ENCODE measurements at regions of chr3 and their contacts with region 1.

Region 1: GRCh38 chr3:58305882-58306711 is at the starts of genes HTD2 and RPP14:
- DNase-seq: peak; percentile 96
- CTCF ChIP-seq: peak; percentile 98

Region 2: GRCh38 chr3:58167431-58168351 is 138.4 kb before region 1 on chr3:
- CTCF ChIA-PET with region 1: interaction called, 17 read pairs
- POLR2A ChIA-PET with region 1: no interaction called
- DNase-seq: peak; percentile 83
- CTCF ChIP-seq: peak; percentile 85

Region 3: GRCh38 chr3:58206406-58207011 is 99.6 kb before region 1 on chr3:
- CTCF ChIA-PET with region 1: interaction called, 27 read pairs
- POLR2A ChIA-PET with region 1: interaction called, 3 read pairs
- DNase-seq: no peak
- CTCF ChIP-seq: no peak

Region 4: DNA sequence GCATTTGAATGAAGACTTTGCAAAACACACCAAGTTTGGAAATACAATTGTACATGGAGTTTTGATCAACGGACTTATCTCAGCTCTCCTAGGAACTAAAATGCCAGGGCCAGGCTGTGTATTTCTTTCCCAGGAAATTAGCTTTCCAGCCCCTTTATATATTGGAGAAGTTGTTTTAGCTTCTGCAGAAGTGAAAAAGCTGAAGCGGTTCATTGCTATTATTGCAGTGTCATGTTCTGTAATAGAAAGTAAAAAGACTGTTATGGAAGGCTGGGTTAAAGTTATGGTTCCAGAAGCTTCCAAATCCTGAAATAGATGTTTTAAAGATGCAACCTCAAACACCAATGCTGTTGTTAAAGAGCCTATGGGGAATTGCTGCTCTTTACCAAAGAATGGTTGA is 11.7 kb after region 1 on chr3:
- CTCF ChIA-PET with region 1: interaction called, 107 read pairs
- POLR2A ChIA-PET with region 1: no interaction called
- DNase-seq: no peak
- CTCF ChIP-seq: no peak

Region 5: DNA sequence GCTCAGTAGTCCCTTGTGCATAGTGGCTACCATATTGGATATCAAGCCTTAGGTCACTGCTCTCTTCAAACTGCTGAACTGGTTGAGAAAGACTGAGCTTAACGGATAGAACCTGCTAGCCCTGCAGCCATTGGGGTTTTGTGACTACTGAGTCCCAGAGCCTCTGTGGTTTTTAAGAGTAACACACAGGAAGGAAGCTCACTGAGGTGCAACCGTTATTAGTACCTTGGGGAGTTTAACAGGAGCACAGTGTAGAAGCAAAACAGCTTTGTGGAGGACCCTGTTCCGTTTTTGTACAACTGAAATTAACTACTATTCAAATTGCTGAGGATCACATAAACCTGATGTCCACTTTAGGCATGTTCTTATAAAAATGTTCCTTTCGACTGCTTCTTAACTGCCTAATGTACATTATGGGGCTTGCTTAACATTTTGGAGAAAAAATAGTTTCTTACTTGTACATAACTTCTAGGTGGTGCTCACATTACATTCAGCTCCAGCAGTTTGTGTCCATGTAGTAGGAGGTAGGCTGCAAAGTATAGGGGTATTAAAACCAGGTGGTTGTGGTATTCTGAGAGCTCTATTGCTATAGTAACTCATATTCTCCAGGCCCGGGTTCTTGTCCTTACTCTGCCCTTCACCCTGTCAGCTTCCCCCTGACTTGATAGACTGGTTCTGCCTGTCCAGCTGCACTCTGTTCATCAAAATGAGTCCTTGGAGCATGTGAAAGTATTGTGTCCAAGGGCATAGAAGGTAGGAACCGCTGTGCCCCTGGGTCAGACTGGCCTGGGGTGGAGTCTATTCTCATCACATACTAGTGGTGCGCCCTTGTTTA is 43.9 kb after region 1 on chr3:
- CTCF ChIA-PET with region 1: interaction called, 19 read pairs
- POLR2A ChIA-PET with region 1: no interaction called
- DNase-seq: peak; percentile 65
- CTCF ChIP-seq: no peak

Region 6: GRCh38 chr3:58491506-58492402 is 185.7 kb after region 1 on chr3 and contains the start of gene KCTD6:
- CTCF ChIA-PET with region 1: interaction called, 32 read pairs
- POLR2A ChIA-PET with region 1: no interaction called
- DNase-seq: peak; percentile 96
- CTCF ChIP-seq: peak; percentile 96

Region 7: GRCh38 chr3:58568572-58569286 is 262.6 kb after region 1 on chr3:
- CTCF ChIA-PET with region 1: interaction called, 18 read pairs
- POLR2A ChIA-PET with region 1: no interaction called
- DNase-seq: peak; percentile 75
- CTCF ChIP-seq: peak; percentile 83

Region 8: DNA sequence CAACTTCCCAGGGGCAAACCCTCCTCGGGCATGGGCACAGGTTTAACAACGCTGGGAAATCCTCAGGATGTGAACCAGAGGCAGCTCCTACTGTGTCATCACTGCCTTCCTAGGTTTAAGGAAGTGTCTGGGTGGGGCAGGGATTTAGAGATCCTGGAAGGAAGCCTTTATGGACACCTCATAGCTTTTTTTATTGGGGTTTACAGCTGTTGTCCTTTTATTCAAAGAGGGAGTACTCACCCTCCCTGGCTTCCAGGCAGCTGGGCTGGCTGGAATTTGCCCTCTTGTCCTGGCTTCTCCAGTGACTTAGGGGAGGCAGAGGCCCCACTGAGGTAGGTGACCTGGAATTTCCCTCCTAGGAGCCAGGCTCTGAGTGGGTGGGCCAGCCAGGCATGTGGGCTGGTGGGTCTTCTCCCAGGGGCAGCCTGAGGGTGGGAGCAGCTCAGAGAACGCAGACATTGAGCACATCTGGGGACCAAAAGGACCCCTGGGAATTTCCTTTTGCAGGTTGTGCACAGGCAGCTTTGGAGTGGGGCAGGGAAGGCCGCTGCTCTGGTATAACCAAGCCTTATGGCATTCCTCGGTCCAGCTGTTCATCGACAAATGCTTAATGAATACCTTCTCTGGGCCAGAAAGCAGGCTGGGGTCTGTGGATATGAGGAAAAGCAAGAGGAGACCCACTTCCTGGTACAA is 374.0 kb after region 1 on chr3:
- CTCF ChIA-PET with region 1: no interaction called
- POLR2A ChIA-PET with region 1: no interaction called
- DNase-seq: no peak
- CTCF ChIP-seq: no peak